Panc1 (cell line): ENCODE measurements at regions of chr21 and their contacts with region 1.

Region 1: GRCh38 chr21:32257962-32258785 is 20.7 kb downstream of the MIS18A start:
- DNase-seq: peak; percentile 53
- ATAC-seq: peak; percentile 94
- H3K4me3 ChIP-seq: no peak overlapping the region
- H3K27ac ChIP-seq: no peak overlapping the region
- H3K4me1 ChIP-seq: no peaks in the 10 kb centered on the region; the same call in 1 of the 2 replicates
- H3K27me3 ChIP-seq: peaks cover 5% of the 10 kb centered on the region; the same call in 1 of the 2 replicates
- CTCF ChIP-seq: peak; percentile 78

Region 2: GRCh38 chr21:31781737-31782136 is 476.4 kb before region 1 on chr21:
- CTCF ChIA-PET with region 1: no interaction called
- POLR2A ChIA-PET with region 1: no interaction called
- in situ Hi-C with region 1: no loop called
- intact Hi-C with region 1: loop called (anchors 2 kb)
- DNase-seq: no peak
- ATAC-seq: no peak
- H3K4me3 ChIP-seq: no peak overlapping the region
- H3K27ac ChIP-seq: no peak overlapping the region
- H3K4me1 ChIP-seq: no peaks in the 10 kb centered on the region
- H3K27me3 ChIP-seq: no peaks in the 10 kb centered on the region
- CTCF ChIP-seq: no peak

Region 3: DNA sequence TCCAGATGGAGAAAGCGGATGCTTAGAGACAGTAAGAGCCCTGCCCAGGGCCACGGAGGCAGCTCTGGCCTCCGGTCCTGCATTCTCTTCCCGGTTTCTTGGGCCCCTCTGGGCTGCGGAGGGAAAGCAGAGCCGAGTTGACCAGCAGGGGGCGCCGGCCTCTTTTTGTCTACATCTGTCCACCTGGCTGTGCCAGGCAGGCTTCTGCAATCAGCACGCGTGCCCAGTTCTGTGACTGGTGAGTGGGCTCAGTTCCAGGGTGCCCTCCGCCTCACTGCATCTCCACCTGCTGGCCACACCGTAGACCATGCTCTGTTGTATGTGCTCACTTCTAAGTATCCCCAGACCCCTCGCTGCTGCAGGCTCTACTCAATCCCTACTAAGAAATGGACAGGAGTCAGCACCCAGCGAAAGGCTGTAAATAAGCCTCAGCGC is 392.1 kb before region 1 on chr21:
- CTCF ChIA-PET with region 1: no interaction called
- POLR2A ChIA-PET with region 1: no interaction called
- in situ Hi-C with region 1: no loop called
- intact Hi-C with region 1: loop called (anchors 2 kb)
- DNase-seq: peak; percentile 8
- ATAC-seq: peak; percentile 96
- H3K4me3 ChIP-seq: no peak overlapping the region
- H3K27ac ChIP-seq: no peak overlapping the region
- H3K4me1 ChIP-seq: no peaks in the 10 kb centered on the region
- H3K27me3 ChIP-seq: peaks cover 3% of the 10 kb centered on the region; the same call in 1 of the 2 replicates
- CTCF ChIP-seq: peak; percentile 87